HEK293T (cell line): ENCODE measurements at regions of chr4 and their contacts with region 1.

Region 1: GRCh38 chr4:138927072-138927471 is 88.5 kb upstream of the NOCT start:
- DNase-seq: no peak

Region 2: GRCh38 chr4:138910607-138911336 is 16.3 kb before region 1 on chr4:
- CTCF ChIA-PET with region 1: no interaction called
- POLR2A ChIA-PET with region 1: no interaction called
- DNase-seq: peak; percentile 40

Region 3: GRCh38 chr4:138938366-138938690 is 11.3 kb after region 1 on chr4:
- CTCF ChIA-PET with region 1: interaction called, 12 read pairs
- POLR2A ChIA-PET with region 1: no interaction called
- DNase-seq: peak; percentile 25

Region 4: GRCh38 chr4:138948918-138949317 is 21.8 kb after region 1 on chr4:
- CTCF ChIA-PET with region 1: no interaction called
- POLR2A ChIA-PET with region 1: no interaction called
- DNase-seq: no peak

Region 5: DNA sequence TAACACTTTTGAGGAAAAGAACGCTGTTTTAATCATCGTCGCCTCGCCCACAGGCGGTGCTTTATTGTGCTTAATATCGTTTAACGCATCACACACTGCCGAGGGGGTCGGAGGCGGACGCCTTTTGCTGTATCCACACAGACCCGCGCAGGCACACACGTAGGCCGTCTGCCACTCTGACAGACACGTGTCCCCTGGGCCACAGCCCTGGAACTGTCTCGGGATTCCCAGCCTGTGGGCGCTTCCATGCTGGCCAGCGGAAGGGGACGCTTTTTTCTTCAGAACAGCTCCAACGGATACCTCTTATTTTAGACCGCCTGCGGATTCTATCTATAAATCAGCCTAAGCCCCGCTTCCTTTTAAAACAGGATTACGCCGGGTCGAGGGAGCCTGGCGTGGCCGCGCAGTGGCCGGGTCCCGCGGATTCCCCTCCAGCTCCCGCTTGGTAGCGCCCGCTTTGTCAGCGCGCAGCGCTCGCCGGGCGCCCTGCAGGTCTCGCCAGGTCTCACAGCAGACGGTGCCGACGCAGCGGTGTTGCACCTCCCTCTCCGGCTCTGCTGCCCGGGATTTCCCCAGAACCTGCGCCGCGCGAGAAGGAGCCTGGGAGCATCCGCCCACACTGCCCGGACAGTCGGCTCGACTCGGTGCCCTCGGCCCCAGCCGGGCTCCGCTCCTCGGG is 88.3 kb after region 1 on chr4 and contains the start of gene NOCT:
- CTCF ChIA-PET with region 1: no interaction called
- POLR2A ChIA-PET with region 1: no interaction called
- DNase-seq: peak; percentile 89